ENCODE measurements at regions of chr16 and their contacts with region 1.

Region 1: GRCh38 chr16:11038767-11039166 is 94.4 kb downstream of the CLEC16A start:
- DNase-seq: peak; percentile 81 to 95
- H3K4me3 ChIP-seq: no peak overlapping the region
- H3K27ac ChIP-seq: peak overlapping the region; percentile 68
- H3K4me1 ChIP-seq: peaks cover 36% of the 10 kb centered on the region
- H3K27me3 ChIP-seq: no peaks in the 10 kb centered on the region
- CTCF ChIP-seq: no peak

Region 2: GRCh38 chr16:11016993-11017392 is 21.8 kb before region 1 on chr16:
- CTCF ChIA-PET with region 1: no interaction called
- POLR2A ChIA-PET with region 1: no interaction called
- intact Hi-C with region 1: loop called (anchors 2 kb)
- DNase-seq: peak; percentile 67 to 75
- H3K4me3 ChIP-seq: no peak overlapping the region
- H3K27ac ChIP-seq: peak overlapping the region; percentile 61
- H3K4me1 ChIP-seq: peaks cover 28% of the 10 kb centered on the region
- H3K27me3 ChIP-seq: no peaks in the 10 kb centered on the region
- CTCF ChIP-seq: no peak

Region 3: DNA sequence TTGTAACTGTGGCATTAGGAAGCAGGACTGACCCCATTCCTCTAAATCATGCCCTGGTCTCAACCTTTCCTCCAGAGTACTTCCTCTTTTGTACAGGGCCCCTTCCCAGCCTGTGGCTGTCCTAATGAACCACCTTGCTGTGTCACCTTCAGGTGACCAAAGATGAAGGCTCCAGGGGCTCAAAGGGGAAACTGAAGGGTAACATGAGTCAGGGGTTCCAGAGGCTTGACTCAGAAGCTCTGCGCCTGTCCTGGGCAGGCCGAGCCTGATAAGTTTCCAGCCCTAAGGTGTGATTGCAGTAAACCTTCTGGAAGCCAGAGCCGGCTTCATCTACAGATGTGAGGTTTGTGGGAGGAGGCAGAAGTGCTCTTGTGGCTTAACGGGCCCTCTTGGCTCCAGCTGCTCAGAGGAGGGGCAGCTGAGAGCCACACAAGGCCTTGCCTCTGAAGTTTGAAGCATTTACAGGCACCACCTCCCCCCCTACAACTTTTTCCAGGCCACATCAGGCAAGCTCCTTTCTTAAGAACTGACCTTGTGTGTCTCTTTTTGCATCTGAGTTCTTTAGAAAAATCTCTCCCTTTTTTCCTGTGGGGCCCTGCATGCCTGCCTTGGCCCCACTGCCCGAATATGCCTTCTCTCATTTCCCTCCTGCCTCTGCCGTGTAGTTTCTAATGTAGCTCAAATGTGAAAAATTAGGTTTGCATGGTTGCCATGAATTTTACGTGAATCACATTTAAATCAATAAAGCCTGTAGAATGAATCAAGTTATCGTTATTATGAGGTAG is 55.5 kb after region 1 on chr16:
- CTCF ChIA-PET with region 1: no interaction called
- POLR2A ChIA-PET with region 1: no interaction called
- intact Hi-C with region 1: loop called (anchors 5 kb)
- DNase-seq: peak; percentile 50 to 83
- H3K4me3 ChIP-seq: no peak overlapping the region
- H3K27ac ChIP-seq: peak overlapping the region; percentile 55
- H3K4me1 ChIP-seq: peaks cover 24% of the 10 kb centered on the region
- H3K27me3 ChIP-seq: no peaks in the 10 kb centered on the region
- CTCF ChIP-seq: no peak

Region 4: GRCh38 chr16:11183035-11183812 is 144.5 kb after region 1 on chr16:
- CTCF ChIA-PET with region 1: no interaction called
- POLR2A ChIA-PET with region 1: interaction called, 12 read pairs
- intact Hi-C with region 1: no loop called
- DNase-seq: no peak
- H3K4me3 ChIP-seq: no peak overlapping the region
- H3K27ac ChIP-seq: no peak overlapping the region
- H3K4me1 ChIP-seq: no peaks in the 10 kb centered on the region
- H3K27me3 ChIP-seq: no peaks in the 10 kb centered on the region
- CTCF ChIP-seq: no peak

Region 5: GRCh38 chr16:11201498-11202259 is 162.9 kb after region 1 on chr16:
- CTCF ChIA-PET with region 1: no interaction called
- POLR2A ChIA-PET with region 1: no interaction called
- intact Hi-C with region 1: loop called (anchors 1 kb)
- DNase-seq: peak; percentile 89 to 94
- H3K4me3 ChIP-seq: peak overlapping the region; percentile 28; the same call in 1 of the 2 replicates
- H3K27ac ChIP-seq: peak overlapping the region; percentile 75
- H3K4me1 ChIP-seq: peaks cover 37% of the 10 kb centered on the region
- H3K27me3 ChIP-seq: no peaks in the 10 kb centered on the region
- CTCF ChIP-seq: no peak